ENCODE measurements at regions of chr11 and their contacts with region 1.

Region 1: GRCh38 chr11:114059278-114059983 is at the start of gene ZBTB16:
- DNase-seq: peak; percentile 86
- H3K4me3 Mint-ChIP-seq: peak within 1 kb of the TSS; percentile 95
- H3K27ac Mint-ChIP-seq: peak within 1 kb of the TSS; percentile 98
- H3K4me1 Mint-ChIP-seq: peaks cover 12% of the 10 kb centered on the region
- H3K27me3 Mint-ChIP-seq: no peaks in the 10 kb centered on the region
- CTCF ChIP-seq: peak; percentile 28
- total RNA-seq, gene ZBTB16: 70.4 and 75.3 TPM in 2 replicates

Region 2: DNA sequence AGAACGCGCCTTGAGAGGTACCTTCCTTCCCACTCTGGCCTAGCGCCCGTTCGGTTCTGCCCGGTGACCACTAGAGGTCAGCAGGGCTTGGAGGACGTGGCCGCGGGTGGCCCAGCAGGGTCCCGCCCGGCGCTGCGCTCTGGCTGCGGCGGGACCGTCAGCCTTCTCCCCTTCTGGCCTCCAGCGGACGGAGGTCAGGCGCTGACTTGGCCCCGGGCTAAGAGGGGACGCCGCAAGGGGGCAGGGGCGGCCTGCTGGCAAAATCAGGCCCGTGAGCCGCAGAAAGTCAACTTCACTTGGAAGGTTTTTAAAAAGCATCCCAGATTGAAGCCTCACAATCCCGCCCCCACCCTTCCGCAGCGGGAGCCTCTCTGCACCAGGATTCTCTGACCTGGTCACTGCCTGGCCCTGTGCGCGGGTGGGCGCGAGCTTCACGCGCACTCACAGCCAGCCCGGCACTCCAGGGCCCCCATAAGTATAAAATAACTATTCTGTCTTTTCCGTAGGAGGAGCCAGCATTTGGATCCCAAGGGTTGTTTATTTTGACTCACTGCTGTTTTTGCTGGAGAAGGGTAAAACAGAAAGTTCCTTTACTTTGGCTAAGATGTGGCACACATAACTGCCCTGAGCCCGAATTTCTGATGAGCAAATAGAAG is 23.1 kb before region 1 on chr11:
- CTCF ChIA-PET with region 1: interaction called, 6 read pairs
- POLR2A ChIA-PET with region 1: interaction called, 10 read pairs
- intact Hi-C with region 1: loop called (anchors 1 kb)
- DNase-seq: peak; percentile 84
- H3K4me3 Mint-ChIP-seq: peak overlapping the region; percentile 68
- H3K27ac Mint-ChIP-seq: peak overlapping the region; percentile 70
- H3K4me1 Mint-ChIP-seq: peaks cover 27% of the 10 kb centered on the region
- H3K27me3 Mint-ChIP-seq: no peaks in the 10 kb centered on the region
- CTCF ChIP-seq: peak; percentile 82

Region 3: GRCh38 chr11:114080219-114080618 is 20.8 kb after region 1 on chr11:
- CTCF ChIA-PET with region 1: no interaction called
- POLR2A ChIA-PET with region 1: interaction called, 14 read pairs
- intact Hi-C with region 1: no loop called
- DNase-seq: peak; percentile 75
- H3K4me3 Mint-ChIP-seq: peak overlapping the region; percentile 67
- H3K27ac Mint-ChIP-seq: peak overlapping the region; percentile 52
- H3K4me1 Mint-ChIP-seq: peaks cover 78% of the 10 kb centered on the region
- H3K27me3 Mint-ChIP-seq: no peaks in the 10 kb centered on the region
- CTCF ChIP-seq: no peak

Region 4: DNA sequence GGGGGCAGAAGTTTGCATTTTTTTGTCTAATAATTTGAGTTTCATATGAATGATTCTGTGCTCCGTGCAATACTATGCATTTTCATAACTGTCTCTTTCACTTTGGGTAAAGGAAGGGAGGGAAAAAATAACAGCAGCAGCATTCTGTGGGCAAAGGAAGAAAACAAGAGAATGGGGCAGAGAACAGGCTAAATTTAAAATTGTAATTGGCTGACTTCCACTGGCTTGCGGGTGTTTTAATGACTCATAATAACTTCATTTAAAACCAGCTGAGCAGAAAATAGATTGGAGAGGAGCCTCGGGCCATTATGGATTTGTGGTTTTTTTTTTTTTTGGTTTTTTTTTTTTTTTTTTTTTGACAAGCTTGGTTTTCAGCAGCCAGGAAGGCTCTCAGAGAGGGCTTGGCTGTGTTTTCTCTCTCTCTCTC is 107.5 kb after region 1 on chr11:
- CTCF ChIA-PET with region 1: no interaction called
- POLR2A ChIA-PET with region 1: interaction called, 31 read pairs
- intact Hi-C with region 1: no loop called
- DNase-seq: peak; percentile 92
- H3K4me3 Mint-ChIP-seq: peak overlapping the region; percentile 58
- H3K27ac Mint-ChIP-seq: peak overlapping the region; percentile 99
- H3K4me1 Mint-ChIP-seq: peaks cover 87% of the 10 kb centered on the region
- H3K27me3 Mint-ChIP-seq: no peaks in the 10 kb centered on the region
- CTCF ChIP-seq: no peak

Region 5: GRCh38 chr11:114192841-114193389 is 133.5 kb after region 1 on chr11:
- CTCF ChIA-PET with region 1: interaction called, 4 read pairs
- POLR2A ChIA-PET with region 1: interaction called, 38 read pairs
- intact Hi-C with region 1: loop called (anchors 1 kb)
- DNase-seq: peak; percentile 43
- H3K4me3 Mint-ChIP-seq: no peak overlapping the region
- H3K27ac Mint-ChIP-seq: peak overlapping the region; percentile 97
- H3K4me1 Mint-ChIP-seq: peaks cover 49% of the 10 kb centered on the region
- H3K27me3 Mint-ChIP-seq: no peaks in the 10 kb centered on the region
- CTCF ChIP-seq: no peak

Region 6: GRCh38 chr11:114197799-114198500 is 138.5 kb after region 1 on chr11:
- CTCF ChIA-PET with region 1: interaction called, 4 read pairs
- POLR2A ChIA-PET with region 1: interaction called, 38 read pairs
- intact Hi-C with region 1: loop called (anchors 1 kb)
- DNase-seq: peak; percentile 95
- H3K4me3 Mint-ChIP-seq: peak overlapping the region; percentile 1
- H3K27ac Mint-ChIP-seq: peak overlapping the region; percentile 97
- H3K4me1 Mint-ChIP-seq: peaks cover 66% of the 10 kb centered on the region
- H3K27me3 Mint-ChIP-seq: no peaks in the 10 kb centered on the region
- CTCF ChIP-seq: no peak

Region 7: GRCh38 chr11:114295676-114296604 is 236.5 kb after region 1 on chr11 and contains the start of gene NNMT:
- CTCF ChIA-PET with region 1: no interaction called
- POLR2A ChIA-PET with region 1: interaction called, 11 read pairs
- intact Hi-C with region 1: no loop called
- DNase-seq: peak; percentile 99
- H3K4me3 Mint-ChIP-seq: peak within 1 kb of the TSS; percentile 78
- H3K27ac Mint-ChIP-seq: peak within 1 kb of the TSS; percentile 98
- H3K4me1 Mint-ChIP-seq: peaks cover 37% of the 10 kb centered on the region
- H3K27me3 Mint-ChIP-seq: no peaks in the 10 kb centered on the region
- CTCF ChIP-seq: no peak
- total RNA-seq, gene NNMT: 429 and 638 TPM in 2 replicates

Measured in MCF 10A (cell line).